A549 (cell line): ENCODE measurements at regions of chrX and their contacts with region 1.

Region 1: DNA sequence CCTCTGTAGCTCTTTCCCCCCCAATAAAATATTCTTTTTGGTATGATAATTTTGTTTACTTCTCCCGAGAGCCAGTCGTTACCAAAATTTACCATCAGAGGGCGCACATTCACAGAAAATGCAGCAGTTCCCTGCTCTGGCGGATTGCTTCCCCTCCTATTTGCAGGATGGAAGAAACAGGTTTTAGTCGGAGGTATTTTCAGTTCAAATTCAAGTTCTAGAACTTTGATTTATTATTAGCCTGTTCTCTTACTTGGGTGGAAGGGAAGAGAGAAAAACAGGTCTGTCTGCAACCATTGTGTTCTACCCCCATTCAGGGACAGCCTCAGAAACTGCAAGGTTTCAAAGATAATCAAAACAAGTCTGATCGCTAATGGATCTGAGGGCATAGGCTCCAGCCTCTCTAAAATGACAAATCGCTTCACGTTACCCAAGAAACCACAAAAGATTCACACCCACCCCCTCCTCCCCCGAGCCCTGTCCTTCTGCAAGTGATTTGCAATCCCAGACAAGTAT is 263.8 kb upstream of the RPS6KA3 start:
- DNase-seq: peak; percentile 41 to 66
- ATAC-seq: peak; percentile 69 to 82; a peak in 5 of 6 replicates
- H3K4me3 ChIP-seq: no peak overlapping the region
- H3K27ac ChIP-seq: peak overlapping the region; percentile 71 to 75
- H3K4me1 ChIP-seq: peaks cover 44% of the 10 kb centered on the region
- CTCF ChIP-seq: peak; percentile 84
- EP300 ChIP-seq: no peak
- POLR2A ChIP-seq: no peak
- RAD21 ChIP-seq: peak; percentile 91 to 93

Region 2: GRCh38 chrX:18741677-18742076 is 1788.8 kb before region 1 on chrX:
- CTCF ChIA-PET with region 1: no interaction called
- POLR2A ChIA-PET with region 1: no interaction called
- DNase-seq: no peak
- ATAC-seq: no peak
- H3K4me3 ChIP-seq: no peak overlapping the region
- H3K27ac ChIP-seq: no peak overlapping the region
- H3K4me1 ChIP-seq: no peaks in the 10 kb centered on the region
- CTCF ChIP-seq: no peak
- EP300 ChIP-seq: no peak
- POLR2A ChIP-seq: no peak
- RAD21 ChIP-seq: no peak

Region 3: DNA sequence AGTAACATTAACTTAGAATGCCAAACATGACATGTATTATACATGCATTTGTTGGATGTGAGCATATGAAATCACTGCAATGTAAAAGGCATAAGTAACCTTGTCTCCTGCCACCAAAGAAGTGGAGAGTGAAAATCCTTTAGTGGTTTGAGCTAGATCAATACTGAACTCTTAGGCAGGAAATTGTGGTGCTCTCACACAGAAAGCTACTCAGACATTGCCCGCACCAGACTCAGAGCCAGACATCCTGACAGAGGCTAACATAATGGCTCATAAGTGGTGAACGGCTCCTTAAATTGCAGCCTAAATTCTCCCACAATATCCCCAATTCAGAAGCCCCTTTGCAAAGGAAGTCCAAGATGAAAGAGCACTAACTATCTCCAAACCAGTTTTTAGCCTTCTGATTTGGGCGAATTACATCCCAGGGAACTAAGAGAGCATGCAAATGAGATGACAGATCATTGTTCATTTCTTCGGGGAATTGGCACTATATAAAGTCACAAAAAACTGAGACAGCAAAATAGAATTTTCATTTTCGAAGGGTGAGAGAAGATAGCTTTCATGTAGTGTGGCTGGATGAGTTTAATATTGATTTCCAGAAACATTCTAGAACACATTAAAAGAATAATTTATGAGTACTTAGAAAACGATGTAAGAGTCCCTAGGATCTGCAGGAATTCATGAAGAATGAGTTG is 30.1 kb before region 1 on chrX:
- CTCF ChIA-PET with region 1: no interaction called
- POLR2A ChIA-PET with region 1: no interaction called
- DNase-seq: no peak
- ATAC-seq: no peak
- H3K4me3 ChIP-seq: no peak overlapping the region
- H3K27ac ChIP-seq: no peak overlapping the region
- H3K4me1 ChIP-seq: no peaks in the 10 kb centered on the region
- CTCF ChIP-seq: no peak
- EP300 ChIP-seq: no peak
- POLR2A ChIP-seq: no peak
- RAD21 ChIP-seq: no peak

Region 4: DNA sequence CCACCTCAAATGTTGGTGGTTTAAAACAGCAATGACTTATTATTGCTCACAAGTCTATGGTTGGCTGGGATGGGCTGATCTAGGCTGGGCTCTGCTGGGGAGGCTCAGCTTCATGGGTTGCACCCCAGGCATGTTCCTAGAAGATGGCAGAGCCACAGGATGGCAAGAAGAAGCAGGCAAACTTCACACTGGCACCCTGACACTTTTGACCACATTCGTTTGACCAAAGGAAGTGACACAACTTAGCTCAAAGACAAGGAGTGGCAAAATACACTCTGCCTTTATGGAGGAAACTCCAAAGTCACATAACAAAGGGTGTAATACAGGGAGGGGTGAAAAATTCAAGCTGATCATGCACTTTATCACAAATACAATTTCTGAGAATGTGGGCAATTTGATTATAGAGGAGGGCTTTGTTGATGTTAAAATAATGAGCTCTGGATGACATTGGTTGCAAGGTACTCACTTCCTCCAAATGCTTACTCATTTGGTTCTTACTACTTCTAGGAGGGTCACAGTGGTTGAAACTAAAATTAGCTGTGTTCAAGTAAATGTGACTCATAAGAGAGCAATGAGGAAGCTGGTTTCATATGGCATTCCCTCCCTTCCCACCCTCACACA is 14.5 kb before region 1 on chrX:
- CTCF ChIA-PET with region 1: interaction called, 20 read pairs
- POLR2A ChIA-PET with region 1: interaction called, 3 read pairs
- DNase-seq: peak; percentile 22 to 85
- ATAC-seq: peak; percentile 87 to 90
- H3K4me3 ChIP-seq: no peak overlapping the region
- H3K27ac ChIP-seq: peak overlapping the region; percentile 65 to 84
- H3K4me1 ChIP-seq: peaks cover 29% of the 10 kb centered on the region
- CTCF ChIP-seq: no peak
- EP300 ChIP-seq: no peak
- POLR2A ChIP-seq: no peak
- RAD21 ChIP-seq: no peak

Region 5: GRCh38 chrX:21479695-21480270 is 949.3 kb after region 1 on chrX:
- CTCF ChIA-PET with region 1: interaction called, 48 read pairs
- POLR2A ChIA-PET with region 1: no interaction called
- DNase-seq: peak; percentile 6 to 67
- ATAC-seq: peak; percentile 80 to 89
- H3K4me3 ChIP-seq: no peak overlapping the region
- H3K27ac ChIP-seq: peak overlapping the region; percentile 52 to 72; a peak in 5 of 6 replicates
- H3K4me1 ChIP-seq: 0 out of 3 replicates have a peak, but pooled peaks cover 5% of the 10 kb centered on the region
- CTCF ChIP-seq: peak; percentile 66
- EP300 ChIP-seq: no peak
- POLR2A ChIP-seq: no peak
- RAD21 ChIP-seq: peak; percentile 75 to 80

Region 6: GRCh38 chrX:21725496-21725895 is 1195.0 kb after region 1 on chrX:
- CTCF ChIA-PET with region 1: interaction called, 71 read pairs
- POLR2A ChIA-PET with region 1: interaction called, 4 read pairs
- DNase-seq: peak; percentile 27 to 45
- ATAC-seq: peak; percentile 63 to 70; a peak in 3 of 6 replicates
- H3K4me3 ChIP-seq: no peak overlapping the region
- H3K27ac ChIP-seq: no peak overlapping the region
- H3K4me1 ChIP-seq: no peaks in the 10 kb centered on the region
- CTCF ChIP-seq: peak; percentile 54
- EP300 ChIP-seq: no peak
- POLR2A ChIP-seq: no peak
- RAD21 ChIP-seq: peak; percentile 69 to 74

Region 7: GRCh38 chrX:21745756-21746155 is 1215.3 kb after region 1 on chrX:
- CTCF ChIA-PET with region 1: interaction called, 10 read pairs
- POLR2A ChIA-PET with region 1: no interaction called
- DNase-seq: peak; percentile 8 to 24
- ATAC-seq: peak in 1 of 2 experiments; percentile 71; a peak in 3 of 6 replicates
- H3K4me3 ChIP-seq: no peak overlapping the region
- H3K27ac ChIP-seq: no peak overlapping the region
- H3K4me1 ChIP-seq: no peaks in the 10 kb centered on the region
- CTCF ChIP-seq: peak; percentile 59
- EP300 ChIP-seq: no peak
- POLR2A ChIP-seq: no peak
- RAD21 ChIP-seq: peak; percentile 51 to 56

Region 8: GRCh38 chrX:21975812-21976211 is 1445.3 kb after region 1 on chrX:
- CTCF ChIA-PET with region 1: interaction called, 10 read pairs
- POLR2A ChIA-PET with region 1: no interaction called
- DNase-seq: peak in 1 of 2 experiments; percentile 43
- ATAC-seq: peak; percentile 71 to 75; a peak in 5 of 6 replicates
- H3K4me3 ChIP-seq: no peak overlapping the region
- H3K27ac ChIP-seq: no peak overlapping the region
- H3K4me1 ChIP-seq: no peaks in the 10 kb centered on the region
- CTCF ChIP-seq: peak; percentile 39
- EP300 ChIP-seq: no peak
- POLR2A ChIP-seq: no peak
- RAD21 ChIP-seq: peak; percentile 51 to 58; a peak in 4 of 5 replicates